Panc1 (cell line): ENCODE measurements at regions of chr11 and their contacts with region 1.

Region 1: GRCh38 chr11:64887757-64888405 is 9.5 kb upstream of the EHD1 start:
- DNase-seq: no peak
- ATAC-seq: peak; percentile 92
- H3K4me3 ChIP-seq: peak overlapping the region; percentile 37 to 56
- H3K27ac ChIP-seq: peak overlapping the region; percentile 85
- H3K4me1 ChIP-seq: peaks cover 19% of the 10 kb centered on the region
- H3K27me3 ChIP-seq: no peaks in the 10 kb centered on the region
- CTCF ChIP-seq: peak; percentile 100

Region 2: GRCh38 chr11:64688534-64688982 is 199.3 kb before region 1 on chr11:
- CTCF ChIA-PET with region 1: no interaction called
- POLR2A ChIA-PET with region 1: no interaction called
- in situ Hi-C with region 1: no loop called
- intact Hi-C with region 1: no loop called
- DNase-seq: peak; percentile 76
- ATAC-seq: peak; percentile 97
- H3K4me3 ChIP-seq: peak overlapping the region; percentile 26 to 46
- H3K27ac ChIP-seq: no peak overlapping the region
- H3K4me1 ChIP-seq: no peaks in the 10 kb centered on the region
- H3K27me3 ChIP-seq: peaks cover 7% of the 10 kb centered on the region
- CTCF ChIP-seq: peak; percentile 99

Region 3: DNA sequence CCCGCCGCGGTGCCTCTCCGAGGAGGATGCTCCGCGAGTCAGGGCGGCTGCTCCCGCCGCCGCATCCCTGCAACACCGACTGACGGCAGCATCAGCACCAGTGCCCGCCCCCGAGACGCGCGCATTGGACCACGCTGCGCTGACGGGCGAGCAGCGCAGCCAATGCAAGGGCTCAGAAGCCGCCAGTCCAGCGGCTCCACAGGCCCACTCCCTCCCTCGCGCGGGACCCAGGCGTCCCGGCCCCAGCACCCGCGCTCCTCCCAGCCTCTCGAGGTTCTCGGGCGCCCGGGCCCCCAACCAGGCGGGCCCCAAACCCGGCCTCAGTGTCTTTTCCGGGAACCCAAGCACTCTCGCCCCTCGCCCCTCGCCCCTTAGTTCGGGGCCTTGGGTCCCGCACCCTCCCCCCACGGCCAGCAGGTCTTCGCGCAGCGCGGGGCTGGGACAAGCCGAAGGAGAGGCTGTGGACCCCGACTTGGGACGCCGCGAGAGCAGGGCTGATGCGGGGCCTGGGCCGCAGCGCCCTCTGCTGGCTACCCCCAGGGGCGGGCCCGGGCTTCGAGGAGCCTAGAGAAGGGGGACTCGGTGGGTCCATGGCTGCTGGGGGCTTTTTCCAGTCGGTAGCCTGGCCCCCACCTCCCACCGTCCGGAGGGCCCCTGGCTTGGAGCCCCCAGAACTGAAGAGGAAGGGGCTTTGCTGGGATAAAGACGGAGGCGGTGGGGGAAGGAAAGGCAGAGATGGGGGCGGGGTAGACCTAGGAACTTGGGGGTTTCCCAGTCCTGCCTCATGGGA is 164.6 kb before region 1 on chr11 and contains the start of gene NRXN2:
- CTCF ChIA-PET with region 1: no interaction called
- POLR2A ChIA-PET with region 1: no interaction called
- in situ Hi-C with region 1: no loop called
- intact Hi-C with region 1: no loop called
- DNase-seq: no peak
- ATAC-seq: peak; percentile 98
- H3K4me3 ChIP-seq: peak within 1 kb of the TSS; percentile 68 to 69
- H3K27ac ChIP-seq: peak within 1 kb of the TSS; percentile 34; the same call in 1 of the 2 replicates
- H3K4me1 ChIP-seq: peaks cover 8% of the 10 kb centered on the region
- H3K27me3 ChIP-seq: no peaks in the 10 kb centered on the region
- CTCF ChIP-seq: peak; percentile 100
- total RNA-seq, gene NRXN2: 0.15 TPM

Region 4: GRCh38 chr11:64902070-64902469 is 14.2 kb after region 1 on chr11:
- CTCF ChIA-PET with region 1: interaction called, 17 read pairs
- POLR2A ChIA-PET with region 1: interaction called, 3 read pairs
- in situ Hi-C with region 1: no loop called
- intact Hi-C with region 1: no loop called
- DNase-seq: no peak
- ATAC-seq: no peak
- H3K4me3 ChIP-seq: no peak overlapping the region
- H3K27ac ChIP-seq: no peak overlapping the region
- H3K4me1 ChIP-seq: peaks cover 7% of the 10 kb centered on the region
- H3K27me3 ChIP-seq: no peaks in the 10 kb centered on the region
- CTCF ChIP-seq: no peak